SK-N-SH (cell line): ENCODE measurements at regions of chr19 and their contacts with region 1.

Region 1: DNA sequence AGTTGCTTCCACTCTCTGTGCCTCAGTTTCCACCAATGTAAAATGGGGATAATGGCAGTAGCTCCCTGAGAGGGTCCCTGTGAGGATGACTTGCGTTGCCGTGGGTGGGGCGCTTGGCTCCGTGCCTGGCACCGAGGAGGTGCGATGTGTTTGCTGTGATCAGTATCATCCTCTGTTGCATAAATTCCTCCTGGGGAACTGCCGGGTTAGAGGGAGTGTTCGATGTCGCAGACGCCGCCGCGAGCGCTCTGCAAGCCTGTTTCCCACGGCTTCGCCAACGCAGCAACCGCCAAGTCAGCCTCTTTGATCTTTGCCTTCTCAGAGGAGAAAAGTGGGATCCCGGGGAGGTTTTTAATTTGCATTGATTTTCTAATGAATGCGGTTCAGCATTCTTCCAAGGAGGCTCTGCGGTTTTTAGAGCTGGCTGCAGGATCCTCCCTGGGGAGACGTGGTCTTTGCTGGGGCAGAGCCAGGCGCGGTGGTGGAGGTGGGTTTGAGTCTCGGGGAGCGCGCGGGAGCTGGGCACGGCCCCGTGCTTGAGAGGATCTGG is 7.6 kb downstream of the GPR32 start:
- DNase-seq: peak; percentile 54
- H3K4me3 ChIP-seq: no peak overlapping the region
- H3K27ac ChIP-seq: no peak overlapping the region
- H3K4me1 ChIP-seq: no peaks in the 10 kb centered on the region
- H3K27me3 ChIP-seq: peaks cover 60% of the 10 kb centered on the region
- CTCF ChIP-seq: no peak
- EP300 ChIP-seq: no peak
- RAD21 ChIP-seq: no peak

Region 2: GRCh38 chr19:50537762-50538230 is 240.0 kb before region 1 on chr19:
- CTCF ChIA-PET with region 1: interaction called, 18 read pairs
- POLR2A ChIA-PET with region 1: no interaction called
- DNase-seq: peak; percentile 93
- H3K4me3 ChIP-seq: peak overlapping the region in 1 of 2 experiments; percentile 22; a peak in 1 of 4 replicates
- H3K27ac ChIP-seq: no peak overlapping the region
- H3K4me1 ChIP-seq: peaks cover 0 to 3% of the 10 kb centered on the region in 2 experiments; a peak in 1 of 4 replicates
- H3K27me3 ChIP-seq: no peaks in the 10 kb centered on the region
- CTCF ChIP-seq: peak; percentile 87
- EP300 ChIP-seq: no peak
- RAD21 ChIP-seq: peak; percentile 82

Region 3: GRCh38 chr19:50607874-50608785 is 169.7 kb before region 1 on chr19:
- CTCF ChIA-PET with region 1: interaction called, 16 read pairs
- POLR2A ChIA-PET with region 1: interaction called, 3 read pairs
- DNase-seq: peak; percentile 92
- H3K4me3 ChIP-seq: peak overlapping the region; percentile 26 to 27; a peak in 3 of 4 replicates
- H3K27ac ChIP-seq: no peak overlapping the region
- H3K4me1 ChIP-seq: peaks cover 0 to 8% of the 10 kb centered on the region in 2 experiments; a peak in 1 of 4 replicates
- H3K27me3 ChIP-seq: peaks cover 6% of the 10 kb centered on the region; the same call in 1 of the 2 replicates
- CTCF ChIP-seq: peak; percentile 78
- EP300 ChIP-seq: no peak
- RAD21 ChIP-seq: peak; percentile 79

Region 4: DNA sequence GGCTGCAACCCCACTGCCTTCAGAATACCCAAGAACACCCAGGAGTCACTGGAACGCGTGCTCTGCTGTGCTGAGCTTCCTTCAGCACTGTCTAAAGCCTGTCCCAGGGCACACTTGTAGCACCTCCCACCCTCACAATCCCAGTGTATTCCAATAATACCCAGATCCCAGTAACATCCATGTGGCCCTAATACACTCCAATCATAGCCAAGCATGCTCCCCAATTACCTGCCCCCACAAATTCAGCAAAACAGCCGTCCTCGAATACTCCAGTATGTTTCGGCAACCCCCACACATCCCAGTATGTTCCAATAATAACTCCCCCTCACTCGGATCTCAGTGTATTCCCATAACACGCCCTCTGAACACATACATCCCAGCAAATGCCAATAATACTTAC is 87.4 kb before region 1 on chr19:
- CTCF ChIA-PET with region 1: interaction called, 16 read pairs
- POLR2A ChIA-PET with region 1: no interaction called
- DNase-seq: no peak
- H3K4me3 ChIP-seq: no peak overlapping the region
- H3K27ac ChIP-seq: no peak overlapping the region
- H3K4me1 ChIP-seq: no peaks in the 10 kb centered on the region; a peak in 1 of 4 replicates
- H3K27me3 ChIP-seq: peaks cover 14% of the 10 kb centered on the region; the same call in 1 of the 2 replicates
- CTCF ChIP-seq: no peak
- EP300 ChIP-seq: no peak
- RAD21 ChIP-seq: no peak

Region 5: DNA sequence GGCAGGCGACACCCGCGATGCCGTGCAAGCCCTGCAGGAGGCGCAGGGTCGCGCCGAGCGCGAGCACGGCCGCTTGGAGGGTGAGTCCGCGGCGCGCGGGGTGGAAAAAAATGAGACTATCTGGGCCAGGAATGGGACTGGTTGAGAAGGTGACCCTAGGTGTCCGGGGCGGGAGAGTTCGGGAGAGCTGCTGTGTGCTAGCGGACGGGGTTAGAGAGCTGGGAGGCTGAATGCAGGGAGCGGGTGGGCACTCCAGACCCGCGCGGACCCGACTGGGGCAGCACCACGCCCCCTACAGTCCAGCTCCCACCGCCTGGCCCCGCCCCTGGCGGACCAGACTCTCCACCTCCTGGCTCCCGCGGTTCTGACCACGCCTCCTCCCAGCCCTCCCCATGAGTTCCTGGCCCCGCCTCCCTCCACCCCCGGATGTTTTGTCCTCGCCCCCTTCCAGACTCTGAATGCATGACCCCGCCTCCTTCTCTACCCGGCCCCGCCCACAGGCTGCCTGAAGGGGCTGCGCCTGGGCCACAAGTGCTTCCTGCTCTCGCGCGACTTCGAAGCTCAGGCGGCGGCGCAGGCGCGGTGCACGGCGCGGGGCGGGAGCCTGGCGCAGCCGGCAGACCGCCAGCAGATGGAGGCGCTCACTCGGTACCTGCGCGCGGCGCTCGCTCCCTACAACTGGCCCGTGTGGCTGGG is 53.2 kb before region 1 on chr19:
- CTCF ChIA-PET with region 1: interaction called, 113 read pairs
- POLR2A ChIA-PET with region 1: interaction called, 6 read pairs
- DNase-seq: peak; percentile 100
- H3K4me3 ChIP-seq: peak overlapping the region; percentile 62 to 83
- H3K27ac ChIP-seq: peak overlapping the region; percentile 46 to 86; a peak in 3 of 4 replicates
- H3K4me1 ChIP-seq: peaks cover 0 to 21% of the 10 kb centered on the region in 2 experiments; a peak in 2 of 4 replicates
- H3K27me3 ChIP-seq: no peaks in the 10 kb centered on the region
- CTCF ChIP-seq: peak; percentile 83
- EP300 ChIP-seq: no peak
- RAD21 ChIP-seq: peak; percentile 55

Region 6: DNA sequence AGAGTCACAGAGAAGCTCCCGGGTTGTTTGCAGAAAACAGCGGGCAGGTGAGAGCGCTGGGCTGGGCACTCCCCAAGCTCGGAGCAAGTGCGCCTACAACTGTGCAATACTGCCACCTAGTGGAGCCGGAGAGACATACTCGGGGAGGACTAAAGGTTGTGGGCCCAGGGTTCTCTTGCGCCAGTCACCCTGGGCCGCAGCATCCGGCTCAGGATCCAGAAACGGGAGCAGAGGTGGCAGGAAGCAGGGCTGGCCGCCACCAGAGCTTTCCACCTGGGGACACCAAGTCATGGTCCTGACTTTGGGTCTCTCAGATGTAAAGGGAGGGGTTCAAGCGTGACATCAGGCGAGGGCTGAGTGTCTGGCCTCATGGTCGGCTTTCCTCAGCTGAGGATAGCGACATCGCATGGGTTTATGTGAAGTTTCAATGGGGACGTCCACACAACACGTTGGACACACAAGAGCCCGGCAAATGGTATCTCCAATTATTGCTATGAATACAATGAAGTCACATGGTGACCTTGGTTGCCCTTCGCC is 144.6 kb after region 1 on chr19:
- CTCF ChIA-PET with region 1: interaction called, 12 read pairs
- POLR2A ChIA-PET with region 1: no interaction called
- DNase-seq: peak; percentile 85
- H3K4me3 ChIP-seq: peak overlapping the region in 1 of 2 experiments; percentile 35; a peak in 1 of 4 replicates
- H3K27ac ChIP-seq: no peak overlapping the region
- H3K4me1 ChIP-seq: no peaks in the 10 kb centered on the region; a peak in 1 of 4 replicates
- H3K27me3 ChIP-seq: peaks cover 63% of the 10 kb centered on the region; the same call in 1 of the 2 replicates
- CTCF ChIP-seq: peak; percentile 76
- EP300 ChIP-seq: no peak
- RAD21 ChIP-seq: peak; percentile 83